ENCODE measurements at regions of chr16 and their contacts with region 1.

Region 1: GRCh38 chr16:75622761-75623605 is at the start of gene ADAT1:
- DNase-seq: peak; percentile 95 to 99 (median 98)

Region 2: GRCh38 chr16:75464130-75464918 is 158.7 kb before region 1 on chr16 and contains the start of gene TMEM170A:
- intact Hi-C with region 1: loop called (anchors 10 kb)
- DNase-seq: peak; percentile 97 to 100 (median 99)

Region 3: GRCh38 chr16:75527825-75528299 is 95.1 kb before region 1 on chr16:
- intact Hi-C with region 1: no loop called
- DNase-seq: no peak

Region 4: GRCh38 chr16:75555707-75556430 is 67.1 kb before region 1 on chr16 and contains the start of gene TMEM231:
- intact Hi-C with region 1: loop called (anchors 5 kb)
- DNase-seq: peak; percentile 97 to 99 (median 98)

Region 5: GRCh38 chr16:75647492-75648264 is 24.7 kb after region 1 on chr16 and contains the starts of genes KARS1 and TERF2IP:
- intact Hi-C with region 1: loop called (anchors 1 kb)
- DNase-seq: peak; percentile 92 to 99 (median 94)

Region 6: GRCh38 chr16:75660726-75661302 is 37.8 kb after region 1 on chr16:
- intact Hi-C with region 1: no loop called
- DNase-seq: no peak

Region 7: DNA sequence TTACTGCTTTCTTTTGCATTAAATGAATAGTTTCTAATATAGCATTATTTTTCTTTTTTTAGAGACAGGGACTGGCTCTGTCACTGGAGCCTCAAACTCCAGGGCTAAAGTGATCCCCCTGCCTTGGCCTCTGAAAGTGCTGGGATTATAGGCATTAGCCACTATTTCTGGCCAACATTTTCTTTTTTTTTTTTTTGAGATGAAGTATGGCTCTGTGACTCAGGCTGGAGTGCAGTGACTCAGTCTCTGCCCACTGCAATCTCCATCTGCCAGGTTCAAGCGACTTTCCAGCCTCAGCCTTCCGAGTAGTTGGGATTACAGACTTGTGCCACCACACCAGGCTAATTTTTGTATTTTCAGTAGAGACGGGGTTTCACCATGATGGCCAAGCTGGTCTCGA is 80.3 kb after region 1 on chr16:
- intact Hi-C with region 1: no loop called
- DNase-seq: no peak